BJ (cell line): ENCODE measurements at regions of chr18 and their contacts with region 1.

Region 1: DNA sequence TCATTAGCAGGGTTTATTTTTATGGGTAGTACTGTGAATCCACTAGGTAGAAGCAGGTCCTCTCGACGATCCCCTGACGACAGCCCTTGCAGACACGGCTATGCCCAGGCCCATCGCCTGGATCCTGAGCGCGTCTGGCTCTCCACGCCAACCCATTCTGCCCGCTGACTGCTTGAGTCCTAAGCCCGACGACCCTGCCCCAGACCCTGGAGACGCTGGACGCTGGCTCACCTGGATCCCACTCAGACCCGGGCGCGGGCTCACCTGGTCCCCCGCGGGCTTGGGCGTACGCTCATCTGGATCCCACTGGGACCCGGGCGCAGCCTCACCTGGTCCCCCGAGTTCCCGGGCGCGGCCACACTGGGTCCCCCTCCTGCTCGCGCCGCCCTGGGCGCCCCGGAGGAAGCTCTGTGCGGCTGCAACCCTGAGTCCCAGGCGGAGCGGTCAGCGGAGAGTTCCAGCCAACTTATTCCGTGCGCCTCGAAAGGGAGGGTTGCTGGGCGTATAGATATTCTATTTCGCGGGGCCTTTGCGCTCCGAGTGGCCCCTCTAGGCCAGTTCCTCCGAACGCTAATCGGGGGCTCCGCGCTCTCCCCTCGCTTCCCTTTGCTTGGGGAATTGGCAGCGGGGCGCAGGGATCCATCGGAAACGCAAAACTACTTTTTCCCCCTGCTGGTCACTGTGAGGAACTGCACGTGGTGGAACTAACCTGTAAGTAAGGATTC is 22.4 kb upstream of the RMP24 start:
- DNase-seq: peak; percentile 3
- H3K4me3 ChIP-seq: peak overlapping the region; percentile 50
- H3K27me3 ChIP-seq: peaks cover 2% of the 10 kb centered on the region
- CTCF ChIP-seq: peak; percentile 94

Region 2: GRCh38 chr18:35939138-35939537 is 10.9 kb before region 1 on chr18:
- CTCF ChIA-PET with region 1: interaction called, 18 read pairs
- POLR2A ChIA-PET with region 1: no interaction called
- DNase-seq: no peak
- H3K4me3 ChIP-seq: no peak overlapping the region
- H3K27me3 ChIP-seq: peaks cover 2% of the 10 kb centered on the region; the same call in 1 of the 2 replicates
- CTCF ChIP-seq: 0 out of 2 replicates have a peak, but pooled peaks have one; percentile 15